H1 (cell line): ENCODE measurements at regions of chr15 and their contacts with region 1.

Region 1: DNA sequence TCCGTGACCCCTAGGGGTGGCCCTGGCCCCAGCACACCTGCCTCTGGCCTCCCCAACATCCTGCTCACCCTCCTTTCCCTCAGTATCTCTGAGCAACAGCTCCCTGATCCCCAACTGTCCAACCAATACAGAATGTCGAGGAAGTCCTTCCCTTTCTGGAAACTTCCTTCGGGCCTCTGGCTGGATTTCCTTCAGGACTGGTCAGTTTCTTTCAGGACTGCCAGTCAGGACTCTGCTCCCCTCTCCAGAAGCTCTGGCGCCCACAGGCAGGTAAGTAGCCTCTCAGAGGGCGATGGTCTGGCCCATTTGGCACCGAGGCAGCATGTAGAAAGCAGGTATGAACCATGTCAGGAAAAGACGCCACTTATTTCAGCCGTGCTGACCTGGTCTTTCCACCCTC is 51.0 kb downstream of the MEGF11 start:
- DNase-seq: no peak
- H3K4me3 ChIP-seq: no peak overlapping the region
- H3K27ac ChIP-seq: no peak overlapping the region
- H3K4me1 ChIP-seq: no peaks in the 10 kb centered on the region
- H3K27me3 ChIP-seq: no peaks in the 10 kb centered on the region
- CTCF ChIP-seq: no peak
- EP300 ChIP-seq: no peak
- POLR2A ChIP-seq: no peak
- RAD21 ChIP-seq: no peak

Region 2: GRCh38 chr15:66016199-66016598 is 186.3 kb before region 1 on chr15:
- CTCF ChIA-PET with region 1: no interaction called
- POLR2A ChIA-PET with region 1: no interaction called
- DNase-seq: no peak
- H3K4me3 ChIP-seq: no peak overlapping the region
- H3K27ac ChIP-seq: no peak overlapping the region
- H3K4me1 ChIP-seq: peaks cover 0 to 6% (median 3%) of the 10 kb centered on the region in 4 experiments; a peak in 4 of 7 replicates
- H3K27me3 ChIP-seq: no peaks in the 10 kb centered on the region
- CTCF ChIP-seq: no peak
- EP300 ChIP-seq: no peak
- POLR2A ChIP-seq: no peak
- RAD21 ChIP-seq: no peak

Region 3: GRCh38 chr15:66147440-66147839 is 55.1 kb before region 1 on chr15:
- CTCF ChIA-PET with region 1: no interaction called
- POLR2A ChIA-PET with region 1: no interaction called
- DNase-seq: no peak
- H3K4me3 ChIP-seq: no peak overlapping the region
- H3K27ac ChIP-seq: no peak overlapping the region
- H3K4me1 ChIP-seq: peaks cover 0 to 7% (median 0%) of the 10 kb centered on the region in 4 experiments; a peak in 4 of 7 replicates
- H3K27me3 ChIP-seq: no peaks in the 10 kb centered on the region
- CTCF ChIP-seq: no peak
- EP300 ChIP-seq: no peak
- POLR2A ChIP-seq: no peak
- RAD21 ChIP-seq: no peak

Region 4: DNA sequence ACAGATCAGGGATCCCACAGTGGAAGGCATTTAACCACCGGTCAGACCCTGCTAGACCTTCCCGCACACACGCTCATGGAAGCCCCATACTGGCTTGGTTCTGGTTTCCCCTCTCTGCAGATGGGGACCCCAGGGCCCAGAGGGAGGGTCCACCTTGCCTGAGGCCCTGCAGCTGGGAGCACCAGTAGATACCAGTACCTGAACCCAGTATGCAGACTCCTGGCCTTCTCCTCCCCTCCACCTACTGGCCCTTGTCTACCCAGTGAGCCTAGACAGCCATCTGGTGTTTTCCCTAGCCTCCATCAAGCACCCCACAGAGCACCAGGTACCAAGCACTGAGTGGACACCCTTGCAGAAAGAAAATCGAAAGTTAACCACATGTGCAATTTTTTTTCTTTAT is 14.1 kb before region 1 on chr15:
- CTCF ChIA-PET with region 1: interaction called, 20 read pairs
- POLR2A ChIA-PET with region 1: no interaction called
- DNase-seq: no peak
- H3K4me3 ChIP-seq: no peak overlapping the region
- H3K27ac ChIP-seq: no peak overlapping the region
- H3K4me1 ChIP-seq: peaks cover 9 to 24% (median 10%) of the 10 kb centered on the region in 4 experiments; a peak in 6 of 7 replicates
- H3K27me3 ChIP-seq: no peaks in the 10 kb centered on the region
- CTCF ChIP-seq: peak; percentile 4 to 37 (median 18)
- EP300 ChIP-seq: no peak
- POLR2A ChIP-seq: no peak
- RAD21 ChIP-seq: peak; percentile 53 to 66